ENCODE measurements at regions of chr20 and their contacts with region 1.

Region 1: DNA sequence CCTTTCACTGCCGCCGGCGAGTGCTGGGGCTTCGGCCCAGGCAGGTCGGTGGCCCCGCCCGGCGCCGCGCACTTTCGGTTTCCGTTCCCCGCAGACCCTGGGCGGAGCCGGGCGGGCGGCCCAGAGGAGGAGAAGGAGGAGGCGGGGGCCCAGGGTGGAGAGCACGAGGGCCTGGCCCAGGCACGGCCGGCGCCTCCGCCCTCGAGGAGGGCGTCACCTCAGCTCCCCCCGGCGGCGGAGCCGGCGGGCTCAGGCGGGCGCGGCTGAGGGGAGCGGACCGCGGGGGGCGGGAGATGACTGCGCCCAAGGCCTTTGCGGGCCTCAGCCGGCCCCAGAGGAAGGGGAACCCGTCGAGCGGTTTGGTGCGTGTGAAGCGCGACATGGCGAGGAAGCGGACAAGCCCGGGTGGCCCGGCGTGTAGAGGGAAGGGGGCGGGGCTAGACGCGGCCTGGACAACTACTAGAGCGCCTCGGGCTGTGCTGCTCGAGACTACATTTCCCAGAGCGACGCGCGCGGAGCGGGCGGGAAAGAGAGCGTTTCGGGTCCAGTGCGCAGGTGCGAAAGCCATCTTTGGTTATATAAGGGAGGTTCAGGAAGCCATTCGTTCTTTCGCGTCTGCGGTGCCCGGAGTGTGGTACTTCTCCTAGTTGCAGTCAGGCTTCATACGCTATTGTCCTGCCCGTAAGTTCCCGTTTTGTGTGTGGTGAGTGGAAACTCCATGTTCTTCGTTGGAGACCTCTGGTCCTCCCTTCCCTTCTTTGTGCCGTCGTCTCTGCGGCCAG is at the start of gene ZNFX1:
- DNase-seq: peak; percentile 96 to 99 (median 99)
- H3K4me3 ChIP-seq: peak within 1 kb of the TSS; percentile 97
- H3K4me3 Mint-ChIP-seq: peak within 1 kb of the TSS; percentile 90 to 98 (median 96)
- H3K27ac ChIP-seq: peak within 1 kb of the TSS; percentile 88
- H3K27ac Mint-ChIP-seq: peak within 1 kb of the TSS; percentile 91 to 100 (median 98)
- H3K4me1 ChIP-seq: peaks cover 65% of the 10 kb centered on the region
- H3K4me1 Mint-ChIP-seq: peaks cover 65 to 80% (median 73%) of the 10 kb centered on the region in 3 donors
- H3K27me3 ChIP-seq: no peaks in the 10 kb centered on the region
- H3K27me3 Mint-ChIP-seq: peaks cover 0 to 14% of the 10 kb centered on the region in 2 donors
- total RNA-seq, gene ZNFX1: 55.7 to 58.9 TPM

Region 2: GRCh38 chr20:49267327-49267726 is 10.9 kb before region 1 on chr20:
- CTCF ChIA-PET with region 1: interaction called, 3 read pairs
- POLR2A ChIA-PET with region 1: interaction called, 12 read pairs
- DNase-seq: no peak
- H3K4me3 ChIP-seq: peak overlapping the region; percentile 32
- H3K4me3 Mint-ChIP-seq: peak overlapping the region; percentile 74 to 86 (median 79)
- H3K27ac ChIP-seq: peak overlapping the region; percentile 25
- H3K27ac Mint-ChIP-seq: peak overlapping the region; percentile 79 to 94 (median 88)
- H3K4me1 ChIP-seq: peaks cover 48% of the 10 kb centered on the region
- H3K4me1 Mint-ChIP-seq: peaks cover 60 to 70% (median 69%) of the 10 kb centered on the region in 3 donors
- H3K27me3 ChIP-seq: no peaks in the 10 kb centered on the region
- H3K27me3 Mint-ChIP-seq: peaks cover 0 to 1% of the 10 kb centered on the region in 2 donors

Region 3: DNA sequence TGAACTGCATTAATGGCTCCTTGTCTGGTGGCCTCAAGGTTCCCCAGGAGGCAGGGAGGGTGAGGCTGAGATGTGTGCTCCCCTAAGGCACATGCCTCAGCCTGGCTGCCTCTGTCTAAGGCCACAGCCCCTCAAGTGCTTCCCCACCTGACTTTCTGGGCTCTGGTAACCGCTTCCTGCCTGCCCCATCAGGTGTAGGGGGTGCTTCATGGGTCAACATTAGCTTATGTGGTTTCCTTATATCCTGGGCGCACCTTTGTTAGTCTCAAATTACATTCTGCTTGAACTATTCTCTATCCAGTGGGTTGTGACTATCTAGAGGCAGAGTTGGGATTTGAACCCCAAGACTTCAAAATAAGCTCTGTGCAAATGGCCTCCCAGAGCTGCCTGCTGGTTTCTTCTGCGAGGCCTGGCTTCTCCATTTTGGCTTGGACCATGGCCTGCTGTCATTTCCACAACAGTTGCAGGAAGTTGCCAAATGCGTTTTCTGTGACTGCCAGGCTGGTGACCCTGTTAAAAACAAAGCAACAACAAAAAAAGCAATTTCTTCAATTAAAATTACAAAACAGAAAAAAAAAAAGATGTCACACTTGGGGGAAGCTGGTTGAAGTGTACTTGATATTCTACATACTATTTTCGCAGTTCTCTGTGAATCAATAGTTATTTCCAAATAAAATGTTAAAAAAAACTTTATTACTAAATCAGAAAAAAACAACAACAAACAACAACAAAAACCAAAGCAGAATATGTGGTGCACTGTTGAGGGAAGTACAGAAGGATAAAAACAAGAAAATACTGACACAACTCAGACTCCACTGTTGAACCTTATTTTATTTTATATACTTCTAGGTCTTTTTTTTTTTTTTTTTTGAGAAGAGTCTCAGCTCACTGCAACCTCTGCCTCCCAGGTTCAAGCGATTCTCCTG is 19.6 kb after region 1 on chr20:
- CTCF ChIA-PET with region 1: interaction called, 4 read pairs
- POLR2A ChIA-PET with region 1: interaction called, 14 read pairs
- DNase-seq: peak in 2 of 5 donors; percentile 42 to 67
- H3K4me3 ChIP-seq: no peak overlapping the region
- H3K4me3 Mint-ChIP-seq: peak overlapping the region in 4 of 7 donors; percentile 18 to 67 (median 49)
- H3K27ac ChIP-seq: no peak overlapping the region
- H3K27ac Mint-ChIP-seq: peak overlapping the region; percentile 50 to 94 (median 90)
- H3K4me1 ChIP-seq: peaks cover under 1% of the 10 kb centered on the region
- H3K4me1 Mint-ChIP-seq: peaks cover 15 to 32% (median 18%) of the 10 kb centered on the region in 3 donors
- H3K27me3 ChIP-seq: no peaks in the 10 kb centered on the region
- H3K27me3 Mint-ChIP-seq: peaks cover 0 to 2% of the 10 kb centered on the region in 2 donors

Region 4: DNA sequence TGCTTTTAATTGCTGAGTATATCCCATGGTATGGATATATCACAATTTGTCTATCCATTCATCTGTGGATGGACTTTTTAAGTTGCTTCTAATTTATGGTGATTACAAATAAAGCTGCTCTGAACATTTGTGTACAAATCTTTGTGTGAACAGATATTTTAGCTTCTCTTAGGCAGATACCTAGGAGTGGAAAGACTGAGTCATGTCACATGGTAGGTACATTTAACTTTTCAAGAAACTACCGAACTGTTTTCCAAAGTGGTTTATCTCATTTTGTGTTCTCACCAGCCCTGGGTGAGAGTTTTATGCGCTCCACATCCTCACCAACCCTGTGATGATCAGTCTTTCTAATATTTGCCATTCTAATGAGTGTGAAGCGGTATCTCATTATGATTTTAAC is 30.6 kb after region 1 on chr20:
- CTCF ChIA-PET with region 1: no interaction called
- POLR2A ChIA-PET with region 1: no interaction called
- DNase-seq: no peak
- H3K4me3 ChIP-seq: no peak overlapping the region
- H3K4me3 Mint-ChIP-seq: no peak overlapping the region
- H3K27ac ChIP-seq: no peak overlapping the region
- H3K27ac Mint-ChIP-seq: no peak overlapping the region
- H3K4me1 ChIP-seq: peaks cover 4% of the 10 kb centered on the region
- H3K4me1 Mint-ChIP-seq: peaks cover 4 to 8% (median 5%) of the 10 kb centered on the region in 3 donors
- H3K27me3 ChIP-seq: peaks cover 3% of the 10 kb centered on the region
- H3K27me3 Mint-ChIP-seq: peaks cover 4 to 9% of the 10 kb centered on the region in 2 donors

Region 5: DNA sequence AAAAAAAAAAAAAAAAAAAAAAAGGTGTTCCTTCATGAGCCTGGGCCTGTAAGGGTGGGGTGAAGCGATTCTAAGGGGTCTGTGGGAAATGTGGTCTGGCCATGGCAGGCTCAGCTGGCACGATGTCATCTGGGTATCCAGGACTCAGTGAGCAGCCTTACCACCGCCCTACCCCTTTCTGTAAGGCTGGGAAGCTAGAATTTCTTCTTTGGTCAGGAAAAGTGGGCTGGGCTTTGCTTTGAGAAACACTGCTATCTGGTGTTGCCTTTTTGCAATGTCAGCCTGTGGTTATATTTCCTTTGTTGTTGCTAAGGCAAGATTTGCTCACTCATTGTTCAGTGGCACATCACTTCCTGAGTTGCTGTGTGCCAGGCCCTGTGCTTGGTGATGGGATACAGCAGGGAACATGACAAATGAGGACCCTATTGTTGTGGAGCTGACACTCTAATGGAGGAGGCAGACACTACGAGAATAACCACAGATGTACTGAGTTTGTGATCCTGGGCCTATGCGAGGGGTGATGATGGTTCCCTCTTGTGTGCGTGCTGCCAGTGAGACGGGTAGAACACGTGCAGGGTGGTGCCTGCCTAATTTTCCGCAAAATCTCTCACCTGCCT is 45.5 kb after region 1 on chr20:
- CTCF ChIA-PET with region 1: interaction called, 8 read pairs
- POLR2A ChIA-PET with region 1: interaction called, 11 read pairs
- DNase-seq: peak in 2 of 5 donors; percentile 47 to 48
- H3K4me3 ChIP-seq: no peak overlapping the region
- H3K4me3 Mint-ChIP-seq: peak overlapping the region in 4 of 7 donors; percentile 45 to 52 (median 48)
- H3K27ac ChIP-seq: no peak overlapping the region
- H3K27ac Mint-ChIP-seq: peak overlapping the region in 7 of 8 donors; percentile 24 to 90 (median 81)
- H3K4me1 ChIP-seq: peaks cover 16% of the 10 kb centered on the region
- H3K4me1 Mint-ChIP-seq: peaks cover 25 to 30% (median 29%) of the 10 kb centered on the region in 3 donors
- H3K27me3 ChIP-seq: peaks cover 12% of the 10 kb centered on the region
- H3K27me3 Mint-ChIP-seq: peaks cover 26 to 27% of the 10 kb centered on the region in 2 donors

Region 6: GRCh38 chr20:49331240-49331614 is 53.0 kb after region 1 on chr20:
- CTCF ChIA-PET with region 1: no interaction called
- POLR2A ChIA-PET with region 1: interaction called, 10 read pairs
- DNase-seq: no peak
- H3K4me3 ChIP-seq: no peak overlapping the region
- H3K4me3 Mint-ChIP-seq: no peak overlapping the region
- H3K27ac ChIP-seq: no peak overlapping the region
- H3K27ac Mint-ChIP-seq: no peak overlapping the region
- H3K4me1 ChIP-seq: no peaks in the 10 kb centered on the region
- H3K4me1 Mint-ChIP-seq: peaks cover 0 to 3% (median 2%) of the 10 kb centered on the region in 3 donors
- H3K27me3 ChIP-seq: no peaks in the 10 kb centered on the region
- H3K27me3 Mint-ChIP-seq: peaks cover 23 to 29% of the 10 kb centered on the region in 2 donors

Measured in CD8-positive, alpha-beta memory T cell (primary cell).